ENCODE measurements at regions of chr2 and their contacts with region 1.

Region 1: DNA sequence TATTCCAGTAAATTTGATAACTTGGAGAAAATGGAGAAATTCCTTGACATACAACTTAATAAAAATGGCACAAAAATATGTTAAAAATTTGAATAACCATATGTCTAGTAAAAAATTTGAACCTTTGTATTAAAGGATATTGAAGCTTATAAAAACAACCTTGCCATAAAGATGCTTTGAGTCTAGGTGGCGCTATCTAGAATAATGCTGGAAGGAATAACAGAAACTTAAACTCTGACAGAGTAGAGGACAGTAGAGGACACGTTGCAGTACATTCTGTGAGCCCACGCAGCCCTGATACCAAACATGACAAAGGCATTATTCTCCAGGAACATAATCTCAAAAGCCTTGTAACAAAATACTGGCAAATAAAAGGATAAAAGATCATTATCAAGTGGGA is 44.7 kb upstream of the ALKAL2 start:
- DNase-seq: no peak
- H3K4me3 ChIP-seq: no peak overlapping the region
- H3K27ac ChIP-seq: no peak overlapping the region
- H3K4me1 ChIP-seq: no peaks in the 10 kb centered on the region; a peak in 1 of 4 replicates
- H3K27me3 ChIP-seq: no peaks in the 10 kb centered on the region
- CTCF ChIP-seq: no peak
- EP300 ChIP-seq: no peak
- RAD21 ChIP-seq: peak; percentile 33; the same call in 1 of the 2 replicates

Region 2: GRCh38 chr2:84121-84520 is 248.5 kb before region 1 on chr2:
- CTCF ChIA-PET with region 1: no interaction called
- POLR2A ChIA-PET with region 1: no interaction called
- DNase-seq: no peak
- H3K4me3 ChIP-seq: no peak overlapping the region
- H3K27ac ChIP-seq: no peak overlapping the region
- H3K4me1 ChIP-seq: no peaks in the 10 kb centered on the region
- H3K27me3 ChIP-seq: no peaks in the 10 kb centered on the region
- CTCF ChIP-seq: no peak
- EP300 ChIP-seq: no peak
- RAD21 ChIP-seq: no peak

Region 3: DNA sequence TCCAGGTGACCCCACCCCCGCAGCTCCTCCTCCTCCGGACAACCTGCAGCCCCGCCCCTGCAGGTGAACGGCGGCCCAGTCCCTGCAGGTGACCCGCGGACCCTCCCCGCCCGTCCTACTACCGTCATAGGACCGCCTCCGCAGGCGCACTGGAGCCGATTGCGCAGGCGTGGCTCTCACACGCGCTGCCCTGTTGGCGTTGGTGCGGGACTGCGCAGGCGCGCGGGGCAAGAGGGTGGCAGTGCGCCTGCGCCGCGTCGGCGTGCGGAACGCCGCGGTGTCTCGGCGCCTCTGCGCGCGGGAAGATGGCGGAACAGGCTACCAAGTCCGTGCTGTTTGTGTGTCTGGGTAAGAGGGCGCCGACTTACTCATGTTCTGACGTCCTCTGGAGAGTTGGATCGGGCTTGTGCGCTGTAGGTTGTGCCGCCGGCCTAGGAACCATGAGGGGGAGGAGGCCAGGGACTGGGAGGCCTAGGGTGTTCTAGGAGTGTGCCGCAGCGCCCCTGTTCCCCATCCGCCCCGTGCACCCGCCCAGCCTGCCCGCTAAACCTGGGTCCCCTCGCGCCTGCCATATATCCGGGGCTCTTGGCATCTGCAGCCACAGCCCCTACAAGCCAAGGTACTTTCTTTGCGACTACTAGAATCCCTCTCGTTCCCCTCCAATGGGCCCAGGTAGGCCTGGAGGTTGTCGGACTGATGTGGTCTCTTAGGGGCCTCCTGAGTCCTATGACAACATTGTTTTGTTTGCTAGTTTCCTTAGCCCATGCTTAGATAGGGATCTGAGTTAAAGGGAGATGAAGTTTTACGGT is 67.7 kb before region 1 on chr2 and contains the start of gene ACP1:
- CTCF ChIA-PET with region 1: no interaction called
- POLR2A ChIA-PET with region 1: no interaction called
- DNase-seq: peak; percentile 100
- H3K4me3 ChIP-seq: peak within 1 kb of the TSS; percentile 98 to 100
- H3K27ac ChIP-seq: peak within 1 kb of the TSS; percentile 63 to 74; a peak in 3 of 4 replicates
- H3K4me1 ChIP-seq: peaks cover 13 to 25% of the 10 kb centered on the region in 2 experiments; a peak in 3 of 4 replicates
- H3K27me3 ChIP-seq: no peaks in the 10 kb centered on the region
- CTCF ChIP-seq: peak; percentile 26
- EP300 ChIP-seq: no peak
- RAD21 ChIP-seq: no peak
- polyA plus RNA-seq, gene ACP1: 88.9 and 108 TPM in 2 replicates

Region 4: DNA sequence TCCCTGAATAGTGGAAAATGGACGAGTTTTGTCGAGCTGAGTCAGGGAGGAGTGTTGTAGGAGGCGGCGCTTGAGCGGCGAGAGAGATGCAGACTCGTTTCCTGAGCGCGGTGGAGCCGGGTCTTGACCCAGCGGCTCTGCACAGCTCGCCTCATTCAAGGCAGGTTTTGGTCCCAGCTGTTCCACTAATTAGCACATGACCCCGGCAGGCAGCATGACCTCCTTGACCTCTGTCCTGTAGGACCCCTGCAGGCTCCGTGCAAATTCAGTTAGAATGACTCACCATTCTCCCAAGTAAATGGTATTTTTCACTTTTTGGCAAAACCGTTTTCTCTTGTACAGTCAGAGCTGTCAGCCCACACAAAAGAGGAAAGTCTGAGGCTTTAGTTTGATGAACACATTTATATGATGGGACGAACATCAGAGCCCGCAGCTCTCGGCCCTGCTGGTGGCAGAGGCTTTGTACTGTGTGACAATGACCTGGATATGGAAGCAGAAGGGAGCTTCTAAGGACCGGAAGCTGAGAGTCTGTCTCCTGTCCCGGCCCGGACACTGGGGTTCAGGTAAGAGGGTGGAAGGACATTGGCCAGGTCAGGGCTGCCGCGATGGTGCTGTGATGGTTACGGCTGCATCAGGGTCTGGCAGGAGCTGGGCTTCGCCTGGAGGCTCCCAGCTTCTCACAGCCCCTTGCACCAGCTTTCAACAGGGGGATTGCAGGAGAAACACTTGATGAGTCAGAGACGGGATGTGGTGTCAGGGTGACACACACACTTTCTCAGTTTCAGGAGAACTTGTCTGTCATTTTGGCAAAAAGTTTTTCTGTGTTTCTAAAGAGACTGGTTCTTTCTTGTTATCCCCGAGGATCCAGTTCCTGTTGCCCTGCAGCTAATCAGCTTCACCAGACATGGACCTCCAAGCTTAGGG is 14.8 kb before region 1 on chr2:
- CTCF ChIA-PET with region 1: interaction called, 27 read pairs
- POLR2A ChIA-PET with region 1: no interaction called
- DNase-seq: no peak
- H3K4me3 ChIP-seq: no peak overlapping the region
- H3K27ac ChIP-seq: no peak overlapping the region
- H3K4me1 ChIP-seq: no peaks in the 10 kb centered on the region; a peak in 1 of 4 replicates
- H3K27me3 ChIP-seq: no peaks in the 10 kb centered on the region
- CTCF ChIP-seq: no peak
- EP300 ChIP-seq: no peak
- RAD21 ChIP-seq: no peak

Region 5: DNA sequence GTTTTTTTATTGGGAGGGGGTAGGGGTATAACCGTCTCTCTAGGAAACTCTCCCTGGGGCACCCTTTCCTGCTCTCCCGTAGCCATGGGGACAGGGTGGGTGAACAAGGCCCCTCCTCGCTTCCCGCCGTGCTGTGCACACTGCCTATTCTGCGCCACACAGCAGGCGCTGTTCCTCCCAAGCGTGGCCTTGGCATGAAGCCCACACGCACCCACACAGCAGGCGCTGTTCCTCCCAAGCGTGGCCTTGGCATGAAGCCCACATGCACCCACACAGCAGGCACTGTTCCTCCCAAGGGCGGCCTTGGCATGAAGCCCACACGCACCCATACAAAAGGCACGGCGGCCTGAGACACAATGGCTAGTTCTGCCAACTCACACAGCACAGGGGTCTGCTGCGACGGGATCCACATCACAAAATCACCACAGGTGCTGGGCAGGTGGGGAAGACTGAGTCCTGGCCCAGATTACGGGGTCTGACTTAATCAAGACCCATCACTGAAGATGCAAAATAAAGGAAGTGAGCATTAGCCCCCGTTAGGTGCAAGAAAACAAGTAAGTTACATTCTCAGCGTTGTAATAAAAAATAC is 1034.0 kb after region 1 on chr2:
- CTCF ChIA-PET with region 1: no interaction called
- POLR2A ChIA-PET with region 1: no interaction called
- DNase-seq: peak; percentile 59
- H3K4me3 ChIP-seq: no peak overlapping the region
- H3K27ac ChIP-seq: no peak overlapping the region
- H3K4me1 ChIP-seq: peaks cover 0 to 6% of the 10 kb centered on the region in 2 experiments; a peak in 1 of 4 replicates
- H3K27me3 ChIP-seq: no peaks in the 10 kb centered on the region
- CTCF ChIP-seq: no peak
- EP300 ChIP-seq: no peak
- RAD21 ChIP-seq: no peak